Ascending aorta (tissue), 2 donors: ENCODE measurements at regions of chr1 and their contacts with region 1.

Region 1: DNA sequence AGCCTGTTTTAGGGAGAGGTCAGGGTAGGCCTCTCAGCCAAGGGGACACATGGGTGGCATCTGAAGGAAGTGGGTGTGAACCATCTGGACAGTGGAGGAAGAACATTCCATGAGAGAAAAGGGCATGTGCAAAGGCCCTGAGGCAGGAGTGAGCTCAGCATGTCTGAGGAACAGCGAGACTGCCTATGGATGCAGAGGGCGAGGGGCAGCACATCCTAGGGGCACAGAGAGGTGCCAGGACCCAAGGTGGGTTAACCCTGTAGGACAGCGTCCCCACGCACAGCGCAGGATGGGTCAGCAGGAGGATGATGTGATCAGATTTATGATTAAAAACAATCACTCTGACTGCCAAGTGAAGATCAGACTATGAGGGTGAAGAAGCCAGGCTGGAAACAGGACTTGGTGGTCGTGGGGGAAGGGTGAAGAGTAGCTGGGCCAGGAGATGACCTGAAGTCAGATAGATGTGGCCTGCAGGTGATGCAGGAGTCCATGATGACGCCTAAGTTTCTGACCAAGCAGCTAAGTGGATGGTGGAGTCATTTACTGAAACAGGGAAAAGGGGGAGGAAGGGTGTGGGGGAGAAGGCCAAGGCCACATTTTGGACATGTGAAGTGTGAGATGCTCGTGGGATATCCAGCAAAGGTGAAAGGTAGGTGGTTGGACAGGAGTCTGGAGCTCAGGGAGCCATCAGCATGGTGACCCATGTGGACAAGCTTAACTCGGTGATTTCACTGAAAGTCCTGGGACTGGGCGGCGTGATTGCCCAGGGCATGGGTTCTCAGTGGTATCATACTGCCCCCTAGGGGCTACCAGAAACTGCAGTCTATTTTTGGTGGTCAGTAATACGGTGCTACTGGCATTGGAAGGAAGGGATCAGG is 37.8 kb downstream of the PABPC4 start:
- DNase-seq: peak in 1 of 2 donors; percentile 81
- H3K4me3 ChIP-seq: no peak overlapping the region
- H3K27ac ChIP-seq: no peak overlapping the region
- H3K4me1 ChIP-seq: no peaks in the 10 kb centered on the region
- H3K27me3 ChIP-seq: no peaks in the 10 kb centered on the region
- CTCF ChIP-seq: peak; percentile 82 to 90 (median 83)

Region 2: DNA sequence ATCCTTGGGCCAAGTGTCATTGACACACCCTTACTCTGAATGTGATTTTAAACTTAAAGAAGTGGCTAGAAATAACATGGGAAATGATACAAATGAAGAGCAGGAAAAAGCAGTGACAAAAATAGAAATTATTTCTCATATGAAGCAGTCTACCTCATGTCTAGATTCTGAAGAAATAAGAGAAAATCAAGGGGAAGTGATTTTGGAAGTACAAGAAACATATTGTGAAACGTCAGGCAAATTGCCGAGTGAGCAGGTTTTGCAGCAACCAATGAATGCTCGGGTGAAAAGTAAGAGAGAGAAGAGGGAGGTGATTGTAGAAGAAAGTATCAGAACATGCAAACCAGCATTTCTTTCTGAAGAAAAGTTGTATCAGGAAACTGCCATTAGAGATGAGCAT is 203.6 kb before region 1 on chr1:
- intact Hi-C with region 1: loop called (anchors 5 kb)
- DNase-seq: no peak
- H3K4me3 ChIP-seq: no peak overlapping the region
- H3K27ac ChIP-seq: peak overlapping the region in 1 of 2 donors; percentile 3
- H3K4me1 ChIP-seq: no peaks in the 10 kb centered on the region
- H3K27me3 ChIP-seq: no peaks in the 10 kb centered on the region
- CTCF ChIP-seq: no peak